Heart left ventricle (tissue), 16 donors: ENCODE measurements at regions of chr5 and their contacts with region 1.

Region 1: GRCh38 chr5:139517683-139518564 is 35.4 kb upstream of the STING1 start:
- DNase-seq: peak; percentile 92 to 97 (median 93)
- ATAC-seq: peak; percentile 77 to 94 (median 94)
- H3K4me3 ChIP-seq: peak overlapping the region; percentile 8 to 73 (median 56)
- H3K27ac ChIP-seq: peak overlapping the region; percentile 76 to 92 (median 86)
- H3K4me1 ChIP-seq: peaks cover 0 to 27% (median 10%) of the 10 kb centered on the region in 12 donors
- H3K27me3 ChIP-seq: no peaks in the 10 kb centered on the region
- CTCF ChIP-seq: peak; percentile 97 to 100 (median 98)
- POLR2A ChIP-seq: peak in 1 of 2 donors; percentile 61

Region 2: GRCh38 chr5:139232147-139232724 is 285.7 kb before region 1 on chr5:
- intact Hi-C with region 1: no loop called
- DNase-seq: no peak
- ATAC-seq: no peak
- H3K4me3 ChIP-seq: no peak overlapping the region
- H3K27ac ChIP-seq: no peak overlapping the region
- H3K4me1 ChIP-seq: no peaks in the 10 kb centered on the region
- H3K27me3 ChIP-seq: no peaks in the 10 kb centered on the region
- CTCF ChIP-seq: no peak
- POLR2A ChIP-seq: no peak

Region 3: GRCh38 chr5:139262742-139263445 is 255.0 kb before region 1 on chr5:
- intact Hi-C with region 1: no loop called
- DNase-seq: peak; percentile 87 to 92 (median 89)
- ATAC-seq: peak; percentile 97 to 99 (median 98)
- H3K4me3 ChIP-seq: no peak overlapping the region
- H3K27ac ChIP-seq: peak overlapping the region in 10 of 12 donors; percentile 21 to 68 (median 30)
- H3K4me1 ChIP-seq: peaks cover 0 to 21% (median 12%) of the 10 kb centered on the region in 12 donors
- H3K27me3 ChIP-seq: no peaks in the 10 kb centered on the region
- CTCF ChIP-seq: peak; percentile 71 to 97 (median 92)
- POLR2A ChIP-seq: no peak

Region 4: GRCh38 chr5:139417214-139417613 is 100.7 kb before region 1 on chr5:
- intact Hi-C with region 1: loop called (anchors 1 to 2 kb)
- DNase-seq: peak in 4 of 5 donors; percentile 73 to 82 (median 78)
- ATAC-seq: peak; percentile 63 to 73 (median 70)
- H3K4me3 ChIP-seq: no peak overlapping the region
- H3K27ac ChIP-seq: peak overlapping the region; percentile 81 to 96 (median 91)
- H3K4me1 ChIP-seq: peaks cover 18 to 73% (median 63%) of the 10 kb centered on the region in 12 donors
- H3K27me3 ChIP-seq: no peaks in the 10 kb centered on the region
- CTCF ChIP-seq: no peak
- POLR2A ChIP-seq: no peak

Region 5: GRCh38 chr5:139439013-139439903 is 78.7 kb before region 1 on chr5 and contains the start of gene DNAJC18:
- intact Hi-C with region 1: loop called in 3 of 10 experiments (anchors 5 kb)
- DNase-seq: peak; percentile 94 to 97 (median 96)
- ATAC-seq: peak; percentile 98 to 99 (median 99)
- H3K4me3 ChIP-seq: peak within 1 kb of the TSS; percentile 55 to 96 (median 89)
- H3K27ac ChIP-seq: peak within 1 kb of the TSS; percentile 87 to 99 (median 96)
- H3K4me1 ChIP-seq: peaks cover 0 to 15% (median 13%) of the 10 kb centered on the region in 12 donors
- H3K27me3 ChIP-seq: no peaks in the 10 kb centered on the region
- CTCF ChIP-seq: no peak
- POLR2A ChIP-seq: peak in 1 of 2 donors; percentile 57
- total RNA-seq, gene DNAJC18: 4.8 to 17.8 (median 14.2) TPM

Region 6: DNA sequence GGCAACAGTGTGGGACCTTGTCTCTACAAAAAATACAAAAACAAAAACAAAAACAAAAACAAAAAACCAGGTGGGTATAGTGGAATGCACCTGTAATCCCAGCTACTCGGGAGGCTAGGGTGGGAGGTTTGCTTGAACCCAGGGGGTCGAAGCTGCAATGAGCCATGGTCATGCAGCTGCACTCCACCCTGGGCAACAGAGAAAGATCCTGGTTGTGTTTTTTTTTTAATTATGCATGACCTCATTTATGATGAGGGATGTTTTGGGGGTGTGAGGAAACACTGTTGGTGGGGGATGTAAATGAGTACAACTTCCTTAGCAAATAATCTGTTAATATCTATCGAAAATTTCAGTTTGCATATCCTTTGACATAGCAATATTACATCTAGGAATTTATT is 13.8 kb after region 1 on chr5:
- intact Hi-C with region 1: no loop called
- DNase-seq: no peak
- ATAC-seq: no peak
- H3K4me3 ChIP-seq: no peak overlapping the region
- H3K27ac ChIP-seq: no peak overlapping the region
- H3K4me1 ChIP-seq: no peaks in the 10 kb centered on the region
- H3K27me3 ChIP-seq: no peaks in the 10 kb centered on the region
- CTCF ChIP-seq: no peak
- POLR2A ChIP-seq: no peak

Region 7: DNA sequence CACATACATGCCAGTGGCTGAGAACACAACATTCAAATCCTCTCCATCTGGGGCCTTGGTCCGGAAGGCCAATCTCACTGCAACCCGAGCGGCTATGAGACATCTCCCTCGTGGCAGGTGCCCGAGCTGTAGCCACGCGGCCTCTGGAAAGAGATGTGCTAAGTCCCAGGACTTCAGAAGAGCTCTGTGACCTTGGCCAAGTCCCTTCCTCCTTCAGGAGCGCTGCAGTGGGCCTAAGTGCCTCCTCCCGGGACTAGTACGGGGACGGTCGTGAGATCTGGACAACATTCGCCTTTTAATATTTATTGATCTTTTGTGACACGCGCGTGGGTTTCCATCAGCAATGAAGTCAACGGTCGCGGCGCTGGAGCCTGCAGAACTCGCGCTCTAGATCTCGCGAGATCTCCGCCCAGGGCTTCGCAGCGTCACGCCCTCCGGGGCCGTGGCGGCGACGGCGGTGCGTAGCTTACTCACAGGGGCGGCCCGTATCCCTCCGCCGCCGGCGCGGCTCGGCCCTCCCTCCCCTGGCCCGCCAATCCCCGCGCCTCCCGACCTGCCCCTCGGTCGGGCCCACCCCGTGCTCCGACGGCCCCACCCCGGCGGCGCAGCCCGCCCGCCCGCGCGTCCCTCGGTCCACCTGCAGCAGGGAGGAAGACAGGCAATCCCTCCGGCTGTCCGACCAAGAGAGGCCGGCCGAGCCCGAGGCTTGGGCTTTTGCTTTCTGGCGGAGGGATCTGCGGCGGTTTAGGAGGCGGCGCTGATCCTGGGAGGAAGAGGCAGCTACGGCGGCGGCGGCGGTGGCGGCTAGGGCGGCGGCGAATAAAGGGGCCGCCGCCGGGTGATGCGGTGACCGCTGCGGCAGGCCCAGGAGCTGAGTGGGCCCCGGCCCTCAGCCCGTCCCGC is 43.1 kb after region 1 on chr5 and contains the start of gene UBE2D2:
- intact Hi-C with region 1: loop called in 2 of 10 experiments (anchors 2 to 5 kb)
- DNase-seq: peak; percentile 97 to 99 (median 98)
- ATAC-seq: peak; percentile 98 to 99 (median 98)
- H3K4me3 ChIP-seq: peak within 1 kb of the TSS; percentile 76 to 100 (median 88)
- H3K27ac ChIP-seq: peak within 1 kb of the TSS; percentile 89 to 100 (median 98)
- H3K4me1 ChIP-seq: peaks cover 14 to 46% (median 41%) of the 10 kb centered on the region in 12 donors
- H3K27me3 ChIP-seq: no peaks in the 10 kb centered on the region
- CTCF ChIP-seq: peak in 1 of 12 donors; percentile 11
- POLR2A ChIP-seq: peak in 1 of 2 donors; percentile 63
- total RNA-seq, gene UBE2D2: 96.2 to 148 (median 134) TPM

Region 8: DNA sequence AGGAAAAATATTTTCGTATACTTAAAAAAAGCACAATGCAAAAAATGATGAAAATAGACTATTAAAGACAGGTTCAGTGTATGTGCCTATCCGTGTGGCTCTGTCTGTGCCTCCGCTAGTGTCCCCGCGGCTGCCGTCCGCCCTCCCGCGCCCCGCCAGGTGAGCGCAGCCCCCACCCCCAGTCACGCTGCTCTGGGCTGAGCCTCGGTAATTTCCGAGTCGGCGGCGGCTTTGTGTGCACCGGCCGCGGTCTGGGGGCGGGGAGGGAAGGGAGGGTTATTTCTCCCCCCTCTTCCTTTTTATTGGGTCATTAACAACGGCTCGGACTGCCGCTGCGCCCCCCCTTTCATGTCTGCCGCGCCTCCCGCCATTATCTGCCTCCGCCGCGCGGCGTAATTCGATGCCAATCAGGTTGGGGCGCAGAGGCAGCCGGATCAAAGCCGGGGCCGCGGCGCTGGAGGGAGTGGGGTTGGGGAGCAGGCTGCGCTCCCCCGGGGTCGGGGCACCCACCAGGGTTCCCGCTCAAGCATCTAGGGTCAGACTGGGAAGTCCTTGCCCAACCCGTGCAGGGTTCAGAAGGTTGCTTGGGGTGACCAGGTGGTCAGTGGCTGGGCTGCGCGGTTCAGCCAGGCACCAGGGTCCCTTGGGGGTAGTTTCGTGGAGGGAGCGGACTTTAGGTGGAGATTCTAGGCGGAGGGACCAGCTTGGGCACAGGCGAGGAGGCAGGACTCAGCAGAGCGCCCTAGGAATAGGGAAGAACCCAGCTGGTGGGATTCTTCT is 238.2 kb after region 1 on chr5:
- intact Hi-C with region 1: no loop called
- DNase-seq: no peak
- ATAC-seq: no peak
- H3K4me3 ChIP-seq: peak overlapping the region in 7 of 12 donors; percentile 7 to 37 (median 26)
- H3K27ac ChIP-seq: no peak overlapping the region
- H3K4me1 ChIP-seq: peaks cover 0 to 11% (median 7%) of the 10 kb centered on the region in 12 donors
- H3K27me3 ChIP-seq: peaks cover 12 to 55% (median 37%) of the 10 kb centered on the region in 9 donors
- CTCF ChIP-seq: no peak
- POLR2A ChIP-seq: no peak

Region 9: DNA sequence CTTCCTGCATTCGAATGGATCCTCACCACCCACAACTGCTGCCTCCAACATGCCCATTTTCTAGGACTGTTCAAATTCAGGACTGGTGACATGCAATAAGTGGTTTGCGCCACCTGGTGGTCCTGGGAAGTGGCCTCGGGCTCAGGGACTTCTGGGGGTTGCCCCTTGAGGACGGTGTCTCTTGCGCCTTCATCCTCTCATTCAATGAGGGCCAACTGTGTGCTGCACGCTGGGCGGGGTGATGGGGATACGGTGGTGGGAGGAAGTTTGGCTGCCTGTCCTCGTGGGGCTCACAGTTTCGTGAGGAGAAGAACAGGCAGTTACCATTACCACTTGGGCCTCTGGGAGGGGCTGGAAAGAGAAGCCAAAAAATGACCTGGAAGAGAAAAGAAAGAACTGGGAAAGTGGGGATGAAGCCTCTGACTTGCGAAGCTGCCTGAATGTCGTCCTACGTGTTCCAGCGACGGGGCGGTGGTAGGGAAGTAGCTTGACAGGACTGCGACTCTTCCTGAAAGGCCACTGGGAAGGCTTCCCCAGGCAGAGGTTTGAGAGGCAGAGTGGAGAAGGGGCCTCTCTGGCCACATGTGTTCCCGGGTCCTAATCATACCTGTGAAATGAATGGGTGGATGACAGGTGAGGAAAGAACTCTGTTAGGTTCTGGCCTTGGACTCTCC is 326.7 kb after region 1 on chr5:
- intact Hi-C with region 1: loop called in 1 of 10 experiments (anchors 5 kb)
- DNase-seq: peak; percentile 56 to 81 (median 70)
- ATAC-seq: peak in 2 of 4 donors; percentile 33 to 45
- H3K4me3 ChIP-seq: no peak overlapping the region
- H3K27ac ChIP-seq: no peak overlapping the region
- H3K4me1 ChIP-seq: peaks cover 0 to 25% (median 9%) of the 10 kb centered on the region in 12 donors
- H3K27me3 ChIP-seq: peaks cover 0 to 9% (median 0%) of the 10 kb centered on the region in 9 donors
- CTCF ChIP-seq: peak; percentile 49 to 78 (median 66)
- POLR2A ChIP-seq: no peak